HCT116 (cell line): ENCODE measurements at regions of chrX and their contacts with region 1.

Region 1: GRCh38 chrX:65772842-65773241 is 105.4 kb downstream of the MSN start:
- DNase-seq: no peak
- ATAC-seq: no peak
- H3K4me3 ChIP-seq: no peak overlapping the region
- H3K27ac ChIP-seq: no peak overlapping the region
- H3K4me1 ChIP-seq: no peaks in the 10 kb centered on the region
- H3K27me3 ChIP-seq: no peaks in the 10 kb centered on the region
- CTCF ChIP-seq: no peak
- POLR2A ChIP-seq: no peak
- RAD21 ChIP-seq: no peak

Region 2: DNA sequence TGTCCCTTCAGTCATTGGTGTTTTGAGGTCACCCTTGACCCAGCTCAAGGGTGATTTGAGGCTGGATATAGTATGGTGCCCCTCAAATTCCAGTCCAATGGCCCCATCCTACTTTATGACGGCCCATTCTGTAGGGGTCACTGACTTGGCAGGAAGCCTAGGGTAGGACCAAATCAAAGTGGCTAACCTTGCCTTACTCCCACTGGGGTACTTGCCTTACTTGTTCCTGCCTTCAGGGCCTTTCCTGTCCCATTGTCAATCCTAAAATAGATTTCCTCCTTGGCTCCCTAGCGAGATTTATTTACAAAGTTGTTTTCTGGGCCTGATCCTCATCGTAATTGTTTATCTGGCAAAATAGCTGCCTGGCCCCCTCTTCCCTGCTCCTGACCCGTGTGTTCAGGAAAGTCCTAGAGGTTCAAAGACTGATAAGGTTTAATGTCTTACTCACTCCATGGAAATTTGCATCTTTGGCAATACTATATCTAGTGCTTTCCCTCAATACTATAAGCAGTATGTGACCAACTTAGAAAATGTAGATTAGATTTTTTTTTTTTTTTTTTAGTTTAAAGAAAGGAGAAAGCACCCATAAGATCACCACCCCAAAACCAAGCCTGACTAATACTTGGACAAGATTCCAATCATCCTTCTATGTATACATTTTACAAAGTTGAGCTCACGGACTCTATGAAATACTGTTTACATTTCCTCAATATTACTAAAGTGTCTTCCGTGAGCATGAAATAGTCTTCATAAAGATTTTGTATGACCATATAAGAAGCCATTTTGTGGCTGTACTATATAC is 60.6 kb before region 1 on chrX:
- CTCF ChIA-PET with region 1: no interaction called
- POLR2A ChIA-PET with region 1: no interaction called
- RAD21 ChIA-PET with region 1: no interaction called
- intact Hi-C with region 1: loop called (anchors 10 kb)
- DNase-seq: no peak
- ATAC-seq: no peak
- H3K4me3 ChIP-seq: no peak overlapping the region
- H3K27ac ChIP-seq: no peak overlapping the region
- H3K4me1 ChIP-seq: no peaks in the 10 kb centered on the region
- H3K27me3 ChIP-seq: no peaks in the 10 kb centered on the region
- CTCF ChIP-seq: no peak
- POLR2A ChIP-seq: no peak
- RAD21 ChIP-seq: no peak

Region 3: GRCh38 chrX:66994729-66995128 is 1221.9 kb after region 1 on chrX:
- CTCF ChIA-PET with region 1: no interaction called
- POLR2A ChIA-PET with region 1: no interaction called
- RAD21 ChIA-PET with region 1: no interaction called
- intact Hi-C with region 1: no loop called
- DNase-seq: no peak
- ATAC-seq: no peak
- H3K4me3 ChIP-seq: no peak overlapping the region
- H3K27ac ChIP-seq: no peak overlapping the region
- H3K4me1 ChIP-seq: no peaks in the 10 kb centered on the region
- H3K27me3 ChIP-seq: no peaks in the 10 kb centered on the region
- CTCF ChIP-seq: no peak
- POLR2A ChIP-seq: no peak
- RAD21 ChIP-seq: no peak